Calu3 (cell line): ENCODE measurements at regions of chr11 and their contacts with region 1.

Region 1: GRCh38 chr11:96464700-96465307 is 75.0 kb downstream of the JRKL start:
- DNase-seq: no peak
- H3K4me3 Mint-ChIP-seq: no peak overlapping the region
- H3K27ac Mint-ChIP-seq: no peak overlapping the region
- H3K4me1 Mint-ChIP-seq: no peaks in the 10 kb centered on the region
- H3K27me3 Mint-ChIP-seq: peaks cover 25% of the 10 kb centered on the region
- CTCF ChIP-seq: peak; percentile 19

Region 2: DNA sequence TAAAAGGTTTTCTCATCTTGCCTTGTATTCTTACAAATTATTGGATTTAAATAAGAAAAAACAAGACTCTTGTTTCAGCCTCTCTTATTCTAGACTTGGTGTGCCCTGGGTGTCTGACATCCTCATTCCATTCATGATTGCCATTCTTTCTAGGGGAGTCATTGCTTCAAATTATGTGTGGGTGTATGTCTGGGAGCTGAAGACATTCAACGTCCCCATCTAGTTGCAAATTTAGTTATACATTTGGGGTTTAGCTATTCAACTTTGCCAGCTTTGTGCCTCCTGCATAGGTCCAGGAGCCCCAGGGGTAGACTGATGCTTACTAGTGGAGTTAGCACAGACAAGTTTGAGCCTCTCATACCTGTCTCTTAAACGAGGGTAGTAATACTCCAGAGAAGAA is 139.8 kb before region 1 on chr11:
- CTCF ChIA-PET with region 1: no interaction called
- intact Hi-C with region 1: no loop called
- DNase-seq: no peak
- H3K4me3 Mint-ChIP-seq: no peak overlapping the region
- H3K27ac Mint-ChIP-seq: peak overlapping the region; percentile 71
- H3K4me1 Mint-ChIP-seq: peaks cover 50% of the 10 kb centered on the region
- H3K27me3 Mint-ChIP-seq: no peaks in the 10 kb centered on the region
- CTCF ChIP-seq: no peak

Region 3: GRCh38 chr11:96794152-96794551 is 329.3 kb after region 1 on chr11:
- CTCF ChIA-PET with region 1: no interaction called
- intact Hi-C with region 1: loop called (anchors 2 kb)
- DNase-seq: no peak
- H3K4me3 Mint-ChIP-seq: no peak overlapping the region
- H3K27ac Mint-ChIP-seq: no peak overlapping the region
- H3K4me1 Mint-ChIP-seq: no peaks in the 10 kb centered on the region
- H3K27me3 Mint-ChIP-seq: peaks cover 14% of the 10 kb centered on the region
- CTCF ChIP-seq: no peak

Region 4: GRCh38 chr11:97140885-97141494 is 676.2 kb after region 1 on chr11:
- CTCF ChIA-PET with region 1: interaction called, 11 read pairs
- intact Hi-C with region 1: loop called (anchors 2 kb)
- DNase-seq: no peak
- H3K4me3 Mint-ChIP-seq: no peak overlapping the region
- H3K27ac Mint-ChIP-seq: no peak overlapping the region
- H3K4me1 Mint-ChIP-seq: no peaks in the 10 kb centered on the region
- H3K27me3 Mint-ChIP-seq: no peaks in the 10 kb centered on the region
- CTCF ChIP-seq: no peak